Heart left ventricle (tissue), 16 donors: ENCODE measurements at regions of chr22 and their contacts with region 1.

Region 1: DNA sequence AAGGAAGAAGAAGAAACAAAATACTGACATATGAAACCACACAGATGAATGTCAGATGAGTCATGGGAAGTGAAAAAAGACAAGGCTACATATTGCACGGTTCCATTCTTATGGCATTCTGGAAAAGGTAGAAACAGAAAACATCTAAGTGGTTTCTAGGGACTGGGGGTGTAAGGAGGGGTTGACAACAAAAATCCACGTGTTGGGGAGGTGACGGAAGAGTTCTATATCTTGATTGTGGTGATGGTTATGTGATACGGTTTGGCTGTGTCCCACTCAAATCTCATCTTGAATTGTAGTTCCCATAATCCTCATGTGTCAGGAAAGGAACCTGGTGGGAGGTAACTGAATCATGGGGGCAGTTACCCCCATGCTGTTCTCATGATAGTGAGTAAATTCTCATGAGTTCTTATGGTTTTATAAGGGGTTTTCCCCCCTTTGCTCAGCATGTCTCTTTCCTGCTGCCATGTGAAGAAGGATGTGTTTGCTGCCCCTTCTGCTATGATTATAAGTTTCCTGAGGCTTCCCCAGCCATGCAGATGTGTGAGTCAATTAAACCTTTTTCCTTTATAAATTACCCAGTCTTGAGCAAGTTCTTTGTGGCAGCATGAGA is 6.4 kb upstream of the ARFGAP3 start:
- DNase-seq: no peak
- ATAC-seq: no peak
- H3K4me3 ChIP-seq: no peak overlapping the region
- H3K27ac ChIP-seq: no peak overlapping the region
- H3K4me1 ChIP-seq: peaks cover 0 to 18% (median 4%) of the 10 kb centered on the region in 12 donors
- H3K27me3 ChIP-seq: no peaks in the 10 kb centered on the region
- CTCF ChIP-seq: no peak
- POLR2A ChIP-seq: no peak

Region 2: DNA sequence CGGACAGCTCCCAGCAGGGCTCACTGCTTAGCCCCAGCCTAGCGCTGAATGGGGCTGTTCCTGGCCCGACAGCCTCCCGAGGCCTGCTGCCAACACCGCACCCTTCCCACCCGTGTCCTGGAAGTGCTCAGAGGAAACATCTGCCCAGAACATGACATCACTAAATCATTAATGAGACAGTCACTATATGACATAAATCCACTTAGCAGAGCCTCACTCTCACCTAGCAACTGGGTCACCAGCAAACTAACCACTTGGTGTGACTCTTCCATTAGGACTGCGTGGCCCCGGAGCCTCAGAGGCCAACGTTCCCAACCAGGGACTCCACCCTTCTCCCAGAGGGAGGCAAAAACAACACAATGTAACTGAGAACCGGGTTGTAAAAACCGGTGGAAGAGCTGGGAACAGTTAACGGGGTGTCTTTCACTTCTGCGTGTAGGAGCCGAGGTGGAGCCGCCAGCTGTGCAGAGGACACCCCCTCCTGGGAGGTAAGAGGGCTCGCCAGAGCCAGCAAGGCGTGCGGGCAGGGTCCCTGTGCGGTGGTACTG is 172.9 kb after region 1 on chr22:
- intact Hi-C with region 1: loop called in 9 of 10 experiments (anchors 1 to 10 kb)
- DNase-seq: peak; percentile 72 to 83 (median 78)
- ATAC-seq: peak; percentile 83 to 96 (median 88)
- H3K4me3 ChIP-seq: peak overlapping the region in 6 of 12 donors; percentile 6 to 29 (median 18)
- H3K27ac ChIP-seq: peak overlapping the region in 9 of 12 donors; percentile 30 to 67 (median 57)
- H3K4me1 ChIP-seq: peaks cover 0 to 15% (median 0%) of the 10 kb centered on the region in 12 donors
- H3K27me3 ChIP-seq: no peaks in the 10 kb centered on the region
- CTCF ChIP-seq: no peak
- POLR2A ChIP-seq: no peak